K562 (cell line): ENCODE measurements at regions of chr19 and their contacts with region 1.

Region 1: GRCh38 chr19:41706741-41707501 is 1.5 kb upstream of the CEACAM5 start:
- DNase-seq: peak; percentile 82 to 94 (median 91)
- ATAC-seq: peak; percentile 99
- H3K4me3 ChIP-seq: peak overlapping the region; percentile 53
- H3K27ac ChIP-seq: no peak overlapping the region
- H3K4me1 ChIP-seq: peaks cover 0 to 7% of the 10 kb centered on the region in 2 experiments; a peak in 2 of 5 replicates
- H3K27me3 ChIP-seq: peaks cover 3 to 11% of the 10 kb centered on the region in 2 experiments; a peak in 3 of 5 replicates
- CTCF ChIP-seq: peak; percentile 83 to 100 (median 97)
- EP300 ChIP-seq: no peak
- POLR2A ChIP-seq: no peak
- RAD21 ChIP-seq: peak; percentile 47 to 64; a peak in 3 of 4 replicates

Region 2: GRCh38 chr19:41689997-41690800 is 16.7 kb before region 1 on chr19:
- CTCF ChIA-PET with region 1: no interaction called
- POLR2A ChIA-PET with region 1: no interaction called
- in situ Hi-C with region 1: no loop called
- intact Hi-C with region 1: no loop called
- DNase-seq: no peak
- ATAC-seq: no peak
- H3K4me3 ChIP-seq: no peak overlapping the region
- H3K27ac ChIP-seq: no peak overlapping the region
- H3K4me1 ChIP-seq: no peaks in the 10 kb centered on the region; a peak in 1 of 5 replicates
- H3K27me3 ChIP-seq: no peaks in the 10 kb centered on the region; a peak in 1 of 5 replicates
- CTCF ChIP-seq: no peak
- EP300 ChIP-seq: no peak
- POLR2A ChIP-seq: no peak
- RAD21 ChIP-seq: no peak

Region 3: DNA sequence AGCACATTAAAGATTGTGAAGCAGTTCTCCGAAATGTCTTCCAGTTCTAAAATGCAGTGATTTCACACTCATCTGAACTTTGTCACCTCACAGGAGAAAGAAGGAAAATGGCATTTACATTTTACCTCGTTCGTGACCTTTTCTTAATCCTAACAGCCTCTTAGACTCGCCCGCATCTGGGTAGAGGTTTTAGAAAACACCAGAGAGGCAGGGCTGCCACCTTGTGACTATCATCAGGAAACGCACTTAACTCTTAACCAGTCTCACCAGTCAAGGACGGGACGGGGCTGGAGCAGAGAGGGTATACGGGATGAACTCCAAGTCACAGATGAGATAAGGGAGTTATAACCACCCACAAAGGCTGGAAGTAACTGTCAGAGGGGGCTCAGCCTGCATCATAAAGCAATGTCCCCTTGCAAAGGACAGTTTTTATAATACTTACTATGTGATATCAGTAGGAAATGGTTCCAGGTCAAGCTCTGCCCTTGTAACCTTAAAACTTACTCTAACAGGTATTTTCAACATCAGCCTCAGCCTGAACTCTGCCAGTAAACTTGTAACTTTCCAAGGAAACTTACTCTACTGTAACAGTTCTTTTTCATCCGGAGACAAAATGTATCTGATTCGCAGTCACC is 39.8 kb after region 1 on chr19:
- CTCF ChIA-PET with region 1: interaction called, 10 read pairs
- POLR2A ChIA-PET with region 1: no interaction called
- in situ Hi-C with region 1: loop called (anchors 5 kb)
- intact Hi-C with region 1: loop called (anchors 1 kb)
- DNase-seq: peak; percentile 28 to 59 (median 32)
- ATAC-seq: peak; percentile 88
- H3K4me3 ChIP-seq: no peak overlapping the region
- H3K27ac ChIP-seq: no peak overlapping the region
- H3K4me1 ChIP-seq: no peaks in the 10 kb centered on the region
- H3K27me3 ChIP-seq: peaks cover 4 to 5% of the 10 kb centered on the region in 2 experiments; a peak in 2 of 5 replicates
- CTCF ChIP-seq: peak; percentile 61 to 81 (median 74)
- EP300 ChIP-seq: no peak
- POLR2A ChIP-seq: no peak
- RAD21 ChIP-seq: peak; percentile 38 to 62

Region 4: GRCh38 chr19:41811036-41811435 is 104.1 kb after region 1 on chr19:
- CTCF ChIA-PET with region 1: no interaction called
- POLR2A ChIA-PET with region 1: no interaction called
- in situ Hi-C with region 1: no loop called
- intact Hi-C with region 1: no loop called
- DNase-seq: no peak
- ATAC-seq: no peak
- H3K4me3 ChIP-seq: no peak overlapping the region
- H3K27ac ChIP-seq: no peak overlapping the region
- H3K4me1 ChIP-seq: no peaks in the 10 kb centered on the region
- H3K27me3 ChIP-seq: peaks cover 3 to 40% of the 10 kb centered on the region in 2 experiments; a peak in 3 of 5 replicates
- CTCF ChIP-seq: no peak
- EP300 ChIP-seq: no peak
- POLR2A ChIP-seq: no peak
- RAD21 ChIP-seq: no peak